ENCODE measurements at regions of chr17 and their contacts with region 1.

Region 1: DNA sequence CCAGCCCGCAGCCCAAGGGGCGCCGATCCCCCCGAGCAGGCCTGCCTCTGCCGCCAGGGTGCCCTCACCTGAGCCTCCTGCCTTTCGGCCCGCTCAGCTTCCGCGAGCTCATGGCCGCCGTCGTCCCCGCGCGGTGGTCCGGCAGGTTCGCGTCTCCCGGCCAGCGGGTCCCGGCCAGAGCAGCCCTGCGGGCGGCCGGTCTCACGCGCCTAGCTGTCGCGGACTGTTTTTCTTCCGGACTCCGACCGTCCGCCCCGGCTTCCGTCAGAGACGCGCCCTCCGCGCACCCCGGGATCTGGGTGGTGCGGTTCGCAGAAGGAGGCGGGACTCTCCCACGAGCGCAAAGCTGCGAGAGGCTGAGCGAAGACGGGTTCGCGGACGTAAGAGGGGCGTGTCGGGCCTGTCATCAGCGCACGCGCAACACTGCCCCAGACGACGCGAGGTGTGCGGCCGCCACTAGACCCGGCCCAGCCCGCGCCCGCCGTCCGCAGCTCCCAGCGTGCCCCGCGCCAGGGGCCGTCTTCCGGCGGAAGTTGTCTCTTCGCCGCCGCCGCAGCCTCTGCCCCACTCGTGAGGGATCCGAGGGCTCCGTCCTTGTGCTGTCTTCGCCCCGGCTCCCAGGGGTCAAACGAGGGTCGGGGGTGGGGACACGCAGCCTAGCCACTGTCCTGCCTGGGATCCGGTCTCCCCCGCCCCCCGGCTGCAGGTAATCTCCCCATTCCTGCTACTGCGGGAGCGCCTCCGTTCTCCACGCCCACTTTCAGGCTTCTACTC is at the start of gene INPP5K:
- DNase-seq: peak; percentile 100
- H3K4me3 Mint-ChIP-seq: peak within 1 kb of the TSS; percentile 88
- H3K27ac Mint-ChIP-seq: peak within 1 kb of the TSS; percentile 84
- H3K4me1 Mint-ChIP-seq: peaks cover 17% of the 10 kb centered on the region
- H3K27me3 Mint-ChIP-seq: no peaks in the 10 kb centered on the region
- total RNA-seq, gene INPP5K: 19.1 and 21.0 TPM in 2 replicates

Region 2: GRCh38 chr17:1275962-1276736 is 240.4 kb before region 1 on chr17:
- intact Hi-C with region 1: loop called (anchors 5 kb)
- DNase-seq: peak; percentile 93
- H3K4me3 Mint-ChIP-seq: peak overlapping the region; percentile 61
- H3K27ac Mint-ChIP-seq: peak overlapping the region; percentile 53
- H3K4me1 Mint-ChIP-seq: peaks cover 16% of the 10 kb centered on the region
- H3K27me3 Mint-ChIP-seq: peaks cover 36% of the 10 kb centered on the region

Region 3: GRCh38 chr17:1399679-1400512 is 116.7 kb before region 1 on chr17 and contains the start of gene YWHAE:
- intact Hi-C with region 1: loop called (anchors 2 kb)
- DNase-seq: peak; percentile 99
- H3K4me3 Mint-ChIP-seq: peak within 1 kb of the TSS; percentile 100
- H3K27ac Mint-ChIP-seq: peak within 1 kb of the TSS; percentile 100
- H3K4me1 Mint-ChIP-seq: peaks cover 21% of the 10 kb centered on the region
- H3K27me3 Mint-ChIP-seq: peaks cover 3% of the 10 kb centered on the region
- total RNA-seq, gene YWHAE: 493 and 504 TPM in 2 replicates

Region 4: DNA sequence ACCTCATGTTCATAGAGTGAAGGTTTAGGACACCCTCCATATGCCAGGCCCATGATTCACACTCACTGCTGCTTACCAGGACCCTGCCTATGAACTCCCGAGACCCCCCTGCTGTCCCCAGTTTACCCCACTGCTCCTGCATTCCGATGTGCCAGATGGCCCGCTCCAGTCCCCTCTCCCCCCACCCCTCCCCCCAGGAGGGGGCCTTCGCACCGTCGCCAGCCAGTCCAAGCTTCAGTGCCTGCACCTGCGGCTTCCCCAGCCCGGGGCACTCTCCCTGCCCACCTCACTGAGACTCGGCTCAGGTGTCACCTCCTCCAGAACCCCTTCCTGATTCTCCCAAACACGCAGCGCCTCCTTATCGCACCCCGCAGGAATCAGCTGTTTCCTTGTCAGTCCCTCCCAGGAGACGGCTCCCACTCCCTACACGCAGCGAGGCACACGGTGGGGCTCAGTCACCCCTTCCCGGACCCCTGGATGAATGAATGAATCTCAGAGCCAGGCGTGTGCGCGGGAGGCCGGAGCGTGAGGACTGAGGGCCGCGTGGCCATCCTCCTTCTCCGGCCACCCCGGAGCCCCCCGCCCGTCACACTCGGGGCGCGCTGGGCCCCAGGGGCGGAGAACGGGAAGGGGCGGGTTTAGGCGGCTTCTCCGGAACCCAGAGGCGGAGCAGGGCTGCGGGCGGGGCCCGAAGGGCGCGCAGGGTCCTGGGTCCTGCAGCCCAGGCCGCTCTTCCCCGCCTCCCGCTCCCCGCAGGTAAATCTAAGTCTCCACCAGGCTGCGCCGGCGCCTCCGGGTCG is 25.7 kb before region 1 on chr17:
- intact Hi-C with region 1: loop called (anchors 1 kb)
- DNase-seq: peak; percentile 94
- H3K4me3 Mint-ChIP-seq: peak overlapping the region; percentile 92
- H3K27ac Mint-ChIP-seq: peak overlapping the region; percentile 79
- H3K4me1 Mint-ChIP-seq: peaks cover 27% of the 10 kb centered on the region
- H3K27me3 Mint-ChIP-seq: no peaks in the 10 kb centered on the region

Measured in activated CD4-positive, alpha-beta T cell treated with anti-CD3 and anti-CD28 coated beads, Interleukin-2, amount 10 ng/mL, durations not matched to agents 24 days and 14 days (primary cell).